Calu3 (cell line): ENCODE measurements at regions of chr5 and their contacts with region 1.

Region 1: GRCh38 chr5:6661961-6662360 is 28.7 kb downstream of the SRD5A1 start:
- DNase-seq: no peak
- H3K4me3 Mint-ChIP-seq: no peak overlapping the region
- H3K27ac Mint-ChIP-seq: peak overlapping the region; percentile 50
- H3K4me1 Mint-ChIP-seq: no peaks in the 10 kb centered on the region
- H3K27me3 Mint-ChIP-seq: no peaks in the 10 kb centered on the region
- CTCF ChIP-seq: no peak

Region 2: GRCh38 chr5:6692906-6693305 is 30.9 kb after region 1 on chr5:
- CTCF ChIA-PET with region 1: interaction called, 10 read pairs
- intact Hi-C with region 1: no loop called
- DNase-seq: no peak
- H3K4me3 Mint-ChIP-seq: no peak overlapping the region
- H3K27ac Mint-ChIP-seq: no peak overlapping the region
- H3K4me1 Mint-ChIP-seq: peaks cover under 1% of the 10 kb centered on the region
- H3K27me3 Mint-ChIP-seq: peaks cover 7% of the 10 kb centered on the region
- CTCF ChIP-seq: no peak